Activated CD4-positive, alpha-beta memory T cell treated with anti-CD3 and anti-CD28 coated beads, Interleukin-2, amount 10 ng/mL, durations not matched to agents 7 days and 5 days (primary cell): ENCODE measurements at regions of chr2 and their contacts with region 1.

Region 1: GRCh38 chr2:7725171-7725849 is 808.1 kb downstream of the RNF144A start:
- DNase-seq: peak; percentile 63
- H3K4me3 Mint-ChIP-seq: peak overlapping the region; percentile 80
- H3K27ac Mint-ChIP-seq: peak overlapping the region; percentile 94
- H3K4me1 Mint-ChIP-seq: peaks cover 58% of the 10 kb centered on the region
- H3K27me3 Mint-ChIP-seq: no peaks in the 10 kb centered on the region

Region 2: GRCh38 chr2:7437716-7438632 is 287.3 kb before region 1 on chr2:
- CTCF ChIA-PET with region 1: no interaction called
- POLR2A ChIA-PET with region 1: interaction called, 12 read pairs
- DNase-seq: no peak
- H3K4me3 Mint-ChIP-seq: peak overlapping the region; percentile 38
- H3K27ac Mint-ChIP-seq: peak overlapping the region; percentile 92
- H3K4me1 Mint-ChIP-seq: peaks cover 69% of the 10 kb centered on the region
- H3K27me3 Mint-ChIP-seq: peaks cover 6% of the 10 kb centered on the region

Region 3: GRCh38 chr2:7672027-7672684 is 53.2 kb before region 1 on chr2:
- CTCF ChIA-PET with region 1: interaction called, 18 read pairs
- POLR2A ChIA-PET with region 1: interaction called, 47 read pairs
- DNase-seq: peak; percentile 66
- H3K4me3 Mint-ChIP-seq: peak overlapping the region; percentile 15
- H3K27ac Mint-ChIP-seq: peak overlapping the region; percentile 83
- H3K4me1 Mint-ChIP-seq: peaks cover 39% of the 10 kb centered on the region
- H3K27me3 Mint-ChIP-seq: no peaks in the 10 kb centered on the region

Region 4: GRCh38 chr2:7748717-7749415 is 23.6 kb after region 1 on chr2:
- CTCF ChIA-PET with region 1: interaction called, 6 read pairs
- POLR2A ChIA-PET with region 1: interaction called, 26 read pairs
- DNase-seq: peak; percentile 37
- H3K4me3 Mint-ChIP-seq: no peak overlapping the region
- H3K27ac Mint-ChIP-seq: peak overlapping the region; percentile 48
- H3K4me1 Mint-ChIP-seq: peaks cover 37% of the 10 kb centered on the region
- H3K27me3 Mint-ChIP-seq: no peaks in the 10 kb centered on the region

Region 5: GRCh38 chr2:8514796-8515758 is 789.8 kb after region 1 on chr2:
- CTCF ChIA-PET with region 1: no interaction called
- POLR2A ChIA-PET with region 1: interaction called, 13 read pairs
- DNase-seq: peak; percentile 77
- H3K4me3 Mint-ChIP-seq: peak overlapping the region; percentile 41
- H3K27ac Mint-ChIP-seq: peak overlapping the region; percentile 89
- H3K4me1 Mint-ChIP-seq: peaks cover 73% of the 10 kb centered on the region
- H3K27me3 Mint-ChIP-seq: no peaks in the 10 kb centered on the region